MCF 10A (cell line): ENCODE measurements at regions of chr2 and their contacts with region 1.

Region 1: GRCh38 chr2:218466016-218466521 is 47.1 kb downstream of the VIL1 start:
- DNase-seq: peak; percentile 27
- H3K4me3 Mint-ChIP-seq: no peak overlapping the region
- H3K27ac Mint-ChIP-seq: no peak overlapping the region
- H3K4me1 Mint-ChIP-seq: no peaks in the 10 kb centered on the region
- H3K27me3 Mint-ChIP-seq: no peaks in the 10 kb centered on the region
- CTCF ChIP-seq: peak; percentile 41

Region 2: GRCh38 chr2:217934321-217935131 is 531.5 kb before region 1 on chr2:
- CTCF ChIA-PET with region 1: no interaction called
- POLR2A ChIA-PET with region 1: no interaction called
- intact Hi-C with region 1: no loop called
- DNase-seq: peak; percentile 77
- H3K4me3 Mint-ChIP-seq: no peak overlapping the region
- H3K27ac Mint-ChIP-seq: no peak overlapping the region
- H3K4me1 Mint-ChIP-seq: peaks cover 28% of the 10 kb centered on the region
- H3K27me3 Mint-ChIP-seq: no peaks in the 10 kb centered on the region
- CTCF ChIP-seq: no peak

Region 3: GRCh38 chr2:218194880-218195279 is 271.2 kb before region 1 on chr2:
- CTCF ChIA-PET with region 1: no interaction called
- POLR2A ChIA-PET with region 1: no interaction called
- intact Hi-C with region 1: no loop called
- DNase-seq: peak; percentile 17
- H3K4me3 Mint-ChIP-seq: no peak overlapping the region
- H3K27ac Mint-ChIP-seq: no peak overlapping the region
- H3K4me1 Mint-ChIP-seq: no peaks in the 10 kb centered on the region
- H3K27me3 Mint-ChIP-seq: peaks cover 22% of the 10 kb centered on the region
- CTCF ChIP-seq: no peak

Region 4: GRCh38 chr2:218448934-218449333 is 17.1 kb before region 1 on chr2:
- CTCF ChIA-PET with region 1: interaction called, 12 read pairs
- POLR2A ChIA-PET with region 1: interaction called, 5 read pairs
- intact Hi-C with region 1: no loop called
- DNase-seq: peak; percentile 69
- H3K4me3 Mint-ChIP-seq: no peak overlapping the region
- H3K27ac Mint-ChIP-seq: no peak overlapping the region
- H3K4me1 Mint-ChIP-seq: peaks cover 6% of the 10 kb centered on the region
- H3K27me3 Mint-ChIP-seq: no peaks in the 10 kb centered on the region
- CTCF ChIP-seq: no peak

Region 5: DNA sequence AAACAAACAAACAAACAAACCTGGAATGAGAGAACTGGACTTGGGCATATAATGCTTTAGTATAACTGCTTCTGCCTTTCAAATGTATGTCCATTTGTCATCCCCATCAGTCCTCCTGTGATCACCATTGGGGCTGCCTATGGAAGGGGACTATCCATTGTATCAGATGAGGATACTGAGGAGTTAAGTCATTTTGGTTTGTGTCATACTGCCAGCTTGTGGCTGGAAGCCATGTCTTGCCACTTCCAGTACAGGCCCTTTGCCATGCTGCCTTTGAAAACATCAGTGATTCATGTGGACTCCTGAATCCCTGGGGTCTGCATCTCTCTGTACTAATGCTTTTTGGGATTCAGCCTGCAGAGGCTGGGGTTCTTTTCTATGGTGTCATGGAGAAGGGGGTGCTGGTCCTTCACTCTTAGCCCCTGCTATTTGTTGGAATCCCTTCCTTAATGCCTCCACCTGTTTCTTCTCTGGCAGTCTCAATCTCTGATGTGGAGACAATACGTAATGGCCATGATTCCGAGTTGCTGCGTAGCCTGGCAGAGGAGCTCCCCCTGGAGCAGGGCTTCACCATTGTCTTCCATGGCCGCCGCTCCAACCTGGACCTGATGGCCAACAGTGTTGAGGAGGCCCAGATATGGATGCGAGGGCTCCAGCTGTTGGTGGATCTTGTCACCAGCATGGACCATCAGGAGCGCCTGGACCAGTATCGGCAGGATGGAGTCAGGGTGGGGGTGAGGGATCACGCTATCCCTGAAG is 152.2 kb after region 1 on chr2:
- CTCF ChIA-PET with region 1: no interaction called
- POLR2A ChIA-PET with region 1: no interaction called
- intact Hi-C with region 1: no loop called
- DNase-seq: peak; percentile 31
- H3K4me3 Mint-ChIP-seq: no peak overlapping the region
- H3K27ac Mint-ChIP-seq: no peak overlapping the region
- H3K4me1 Mint-ChIP-seq: no peaks in the 10 kb centered on the region
- H3K27me3 Mint-ChIP-seq: no peaks in the 10 kb centered on the region
- CTCF ChIP-seq: no peak